GM13977 (cell line): ENCODE measurements at regions of chr13 and their contacts with region 1.

Region 1: DNA sequence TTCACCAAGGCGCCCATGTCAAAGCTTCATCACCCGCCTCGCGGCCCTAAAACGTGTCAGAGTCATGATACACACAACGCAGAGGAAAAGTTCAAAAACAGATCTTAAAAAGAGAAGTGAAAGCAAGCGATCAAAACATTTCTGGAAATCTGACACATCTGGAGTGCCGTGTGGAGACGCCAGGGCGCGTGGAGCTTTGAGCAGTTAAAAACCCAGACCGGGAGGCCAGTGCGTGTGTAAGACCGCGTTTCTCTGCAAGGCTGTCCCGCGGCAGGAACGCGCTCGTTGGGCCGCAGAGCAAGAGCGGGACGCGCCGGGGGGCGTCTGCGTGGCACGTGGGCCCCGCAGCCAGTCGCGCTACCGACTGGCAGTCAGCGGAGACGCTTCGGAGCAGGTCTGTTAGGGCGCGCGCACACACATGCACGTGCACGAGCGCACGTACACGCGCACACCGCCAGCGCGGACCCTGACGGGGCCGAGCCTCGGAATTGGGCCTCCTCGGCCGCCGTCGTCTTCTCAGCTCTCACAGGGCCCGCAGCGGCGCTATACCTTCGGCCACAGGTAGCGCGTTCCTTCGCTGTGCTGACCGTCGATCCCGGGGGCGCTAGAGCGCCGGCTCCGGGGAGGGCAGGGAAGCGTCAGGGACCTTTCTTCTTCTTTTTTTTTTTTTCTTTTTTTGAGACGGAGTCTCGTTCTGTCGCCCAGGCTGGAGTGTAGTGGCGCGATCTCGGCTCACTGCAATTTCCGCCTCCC is 35.8 kb downstream of the RNF6 start:
- DNase-seq: peak; percentile 79
- CTCF ChIP-seq: peak; percentile 60

Region 2: DNA sequence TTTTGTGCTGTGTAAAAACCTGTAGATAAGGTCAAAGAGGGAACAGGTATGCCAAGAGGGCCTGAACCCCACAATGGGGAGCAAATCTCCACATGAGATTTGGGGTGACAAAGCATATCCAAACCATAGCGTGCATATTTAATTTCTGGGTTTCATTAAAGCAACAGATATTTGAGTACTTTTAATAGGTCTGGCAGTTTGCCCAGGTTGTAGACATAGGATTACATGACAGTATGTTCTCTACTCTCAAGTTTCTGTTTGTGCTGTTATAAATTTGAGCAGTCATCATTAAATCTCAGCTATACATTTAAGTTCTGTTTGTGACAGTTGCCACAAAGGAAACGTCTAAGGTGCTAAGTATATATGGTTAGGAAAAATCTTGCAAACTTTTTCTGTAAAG is 578.1 kb before region 1 on chr13:
- in situ Hi-C with region 1: no loop called
- DNase-seq: no peak
- CTCF ChIP-seq: no peak

Region 3: DNA sequence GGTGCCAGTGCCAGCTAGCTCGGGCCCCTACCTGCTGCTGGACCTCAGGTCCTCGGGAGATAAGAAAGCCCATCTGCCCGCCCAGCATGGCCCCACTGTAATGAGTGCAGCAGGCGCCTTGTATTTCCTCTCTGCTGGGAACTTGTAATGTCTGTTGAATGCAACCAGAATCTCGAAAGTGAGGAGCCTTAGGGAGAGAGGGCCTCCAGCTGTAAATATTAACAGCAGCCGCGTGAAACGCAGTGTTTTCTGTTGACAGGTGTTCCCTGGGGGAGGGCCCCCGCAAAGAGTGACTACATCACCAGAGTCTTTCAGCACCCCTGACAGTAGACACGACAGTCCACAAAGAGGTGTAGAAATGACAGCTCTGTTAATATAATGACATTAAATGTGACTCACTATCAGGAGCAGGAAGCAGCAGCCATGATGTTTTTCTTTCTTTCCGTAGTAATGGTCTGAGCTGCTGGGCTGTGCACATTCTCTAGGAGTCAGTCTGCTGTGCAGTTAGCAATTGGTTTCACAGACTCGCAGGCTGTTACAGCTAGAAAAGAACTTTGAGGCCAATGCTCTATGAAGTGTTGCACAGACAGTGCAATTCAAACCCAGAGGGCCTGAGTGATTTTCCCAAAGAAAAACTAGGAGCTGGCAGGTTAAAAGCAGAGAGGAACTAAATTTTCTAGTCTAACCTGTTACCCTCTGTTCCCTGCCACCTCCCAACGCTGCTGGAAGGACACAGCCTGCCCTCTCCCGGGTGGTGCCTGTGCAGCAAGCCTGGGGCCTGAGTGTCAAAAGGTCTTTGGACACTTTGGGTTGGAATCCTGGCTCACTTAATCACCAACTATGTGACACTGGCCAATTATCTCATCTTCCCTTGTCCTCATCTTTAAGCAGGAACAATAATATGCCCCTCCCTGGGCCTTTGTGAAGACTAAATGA is 312.6 kb after region 1 on chr13:
- in situ Hi-C with region 1: loop called (anchors 10 kb)
- DNase-seq: no peak
- CTCF ChIP-seq: no peak

Region 4: DNA sequence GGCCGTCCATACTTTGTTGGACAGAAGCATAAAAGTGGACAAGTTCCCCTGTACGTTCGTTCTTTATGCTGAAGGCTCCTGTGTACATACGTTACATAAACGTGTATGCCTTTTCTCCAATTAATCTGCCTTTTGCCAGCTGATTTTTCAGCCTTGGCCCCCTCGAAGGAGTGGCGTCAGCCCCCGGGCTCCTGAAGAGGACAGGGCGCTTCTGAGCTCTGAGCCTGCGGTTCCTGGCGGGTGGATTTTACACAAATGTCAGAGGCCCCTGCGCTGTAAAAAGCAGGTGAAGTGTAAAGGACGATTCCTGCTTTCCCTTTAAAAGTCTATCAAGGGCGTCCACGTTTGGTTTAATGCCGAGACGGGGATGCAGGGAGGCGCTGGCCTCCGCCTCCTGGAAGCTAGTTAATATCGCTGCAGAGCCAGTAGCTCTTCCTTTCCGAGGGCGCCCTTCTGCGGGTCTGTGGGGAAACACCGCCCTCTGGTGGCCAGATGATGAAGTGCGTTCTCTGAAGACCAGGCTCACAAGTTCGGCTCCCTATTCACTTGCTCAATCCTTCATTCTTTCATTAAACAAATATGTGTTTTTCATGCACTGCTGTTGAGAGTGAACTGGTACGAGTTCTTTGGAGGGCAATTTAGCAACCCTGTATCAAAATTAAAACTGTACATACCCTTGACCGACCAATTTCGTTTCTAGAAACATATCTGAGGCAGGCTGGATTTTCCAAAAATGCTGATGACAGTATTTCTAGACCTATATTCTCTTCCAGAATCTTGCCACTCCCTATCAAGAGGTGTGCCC is 512.3 kb after region 1 on chr13:
- in situ Hi-C with region 1: loop called (anchors 25 kb)
- DNase-seq: peak; percentile 86
- CTCF ChIP-seq: peak; percentile 95

Region 5: DNA sequence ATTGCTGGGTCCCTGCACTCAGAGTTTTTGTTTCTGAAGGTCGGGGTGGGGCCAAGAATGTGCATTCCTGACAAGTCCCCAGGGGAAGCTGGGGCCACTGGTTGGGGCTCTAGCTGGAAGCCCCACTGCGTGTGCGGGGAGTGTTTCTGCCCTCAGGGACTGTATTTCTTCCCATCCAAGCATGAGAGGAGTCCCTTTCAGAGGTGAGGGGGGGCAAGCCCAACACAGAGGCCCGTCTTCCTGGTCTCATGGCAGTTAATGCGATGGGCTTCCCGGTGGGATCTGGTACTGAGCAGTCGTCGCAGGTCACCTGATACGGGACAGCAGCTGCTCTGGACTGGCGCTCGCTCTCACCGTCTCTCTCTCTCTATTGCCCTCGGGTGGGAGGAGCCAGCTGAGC is 523.9 kb after region 1 on chr13:
- in situ Hi-C with region 1: no loop called
- DNase-seq: no peak
- CTCF ChIP-seq: no peak